PC-9 (cell line): ENCODE measurements at regions of chr2 and their contacts with region 1.

Region 1: DNA sequence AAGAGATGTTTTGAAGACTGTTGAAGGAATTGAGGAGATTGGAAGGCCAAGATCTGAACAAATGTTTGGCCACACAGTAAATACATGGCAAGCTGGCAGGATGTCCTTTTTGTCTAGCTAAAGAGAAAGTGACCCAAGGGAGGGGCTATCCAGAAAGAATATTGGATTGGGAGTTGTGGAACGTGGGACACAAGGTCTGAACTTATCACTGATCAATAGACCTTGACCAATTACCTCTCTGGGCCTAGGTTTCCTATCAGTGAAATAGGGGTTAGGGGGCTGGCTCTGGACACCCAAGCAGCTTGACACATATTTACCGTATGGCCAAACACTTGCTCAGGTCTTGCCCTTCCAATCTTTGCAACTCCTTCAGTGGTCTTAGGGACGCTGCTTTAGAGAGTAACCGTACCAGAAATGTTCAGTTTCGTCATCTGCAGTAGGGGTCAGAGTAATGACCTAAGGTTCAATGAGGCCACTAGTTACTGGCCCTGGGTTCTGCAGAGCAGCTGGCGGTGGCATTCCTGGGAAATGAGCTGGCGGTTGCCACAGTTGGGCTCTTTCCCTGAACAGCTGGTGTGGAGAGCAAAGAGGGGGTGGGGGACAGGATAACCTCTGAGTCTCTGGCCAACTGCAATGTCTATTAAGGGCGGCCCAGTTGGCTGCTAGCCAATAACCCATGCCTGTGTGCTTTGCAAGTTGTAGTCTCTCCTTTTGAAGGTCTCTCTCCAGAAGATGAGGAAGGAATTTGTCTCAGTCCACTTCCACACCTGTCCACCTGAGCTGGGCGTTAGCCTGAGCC is 70.2 kb upstream of the STPG4 start:
- DNase-seq: peak; percentile 81 to 84
- H3K4me3 ChIP-seq: no peak overlapping the region
- H3K27ac ChIP-seq: no peak overlapping the region
- H3K4me1 ChIP-seq: peaks cover 33% of the 10 kb centered on the region
- H3K27me3 ChIP-seq: no peaks in the 10 kb centered on the region
- CTCF ChIP-seq: no peak

Region 2: DNA sequence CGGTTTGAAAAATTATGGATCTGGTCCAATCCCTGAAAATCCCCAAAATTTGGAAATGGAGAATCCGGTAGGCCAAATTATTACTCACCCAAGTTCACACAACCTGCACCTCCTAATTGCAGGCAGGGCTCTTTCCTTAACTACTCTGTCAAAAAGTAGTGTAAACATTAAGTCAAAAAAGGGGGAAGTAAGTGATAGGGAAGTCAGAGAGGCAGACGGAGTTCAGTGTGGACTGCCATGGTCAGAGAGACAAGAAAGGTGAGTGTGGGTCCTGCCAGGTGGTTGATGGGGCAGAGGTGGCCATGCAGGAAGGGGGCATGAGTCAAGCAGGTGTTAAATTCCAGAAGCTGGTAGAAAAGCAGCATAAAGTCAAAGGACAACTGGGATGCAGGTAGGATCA is 34.6 kb after region 1 on chr2:
- CTCF ChIA-PET with region 1: no interaction called
- POLR2A ChIA-PET with region 1: no interaction called
- intact Hi-C with region 1: loop called (anchors 2 kb)
- DNase-seq: peak in 1 of 2 experiments; percentile 50
- H3K4me3 ChIP-seq: no peak overlapping the region
- H3K27ac ChIP-seq: no peak overlapping the region
- H3K4me1 ChIP-seq: peaks cover 44% of the 10 kb centered on the region
- H3K27me3 ChIP-seq: no peaks in the 10 kb centered on the region
- CTCF ChIP-seq: no peak

Region 3: DNA sequence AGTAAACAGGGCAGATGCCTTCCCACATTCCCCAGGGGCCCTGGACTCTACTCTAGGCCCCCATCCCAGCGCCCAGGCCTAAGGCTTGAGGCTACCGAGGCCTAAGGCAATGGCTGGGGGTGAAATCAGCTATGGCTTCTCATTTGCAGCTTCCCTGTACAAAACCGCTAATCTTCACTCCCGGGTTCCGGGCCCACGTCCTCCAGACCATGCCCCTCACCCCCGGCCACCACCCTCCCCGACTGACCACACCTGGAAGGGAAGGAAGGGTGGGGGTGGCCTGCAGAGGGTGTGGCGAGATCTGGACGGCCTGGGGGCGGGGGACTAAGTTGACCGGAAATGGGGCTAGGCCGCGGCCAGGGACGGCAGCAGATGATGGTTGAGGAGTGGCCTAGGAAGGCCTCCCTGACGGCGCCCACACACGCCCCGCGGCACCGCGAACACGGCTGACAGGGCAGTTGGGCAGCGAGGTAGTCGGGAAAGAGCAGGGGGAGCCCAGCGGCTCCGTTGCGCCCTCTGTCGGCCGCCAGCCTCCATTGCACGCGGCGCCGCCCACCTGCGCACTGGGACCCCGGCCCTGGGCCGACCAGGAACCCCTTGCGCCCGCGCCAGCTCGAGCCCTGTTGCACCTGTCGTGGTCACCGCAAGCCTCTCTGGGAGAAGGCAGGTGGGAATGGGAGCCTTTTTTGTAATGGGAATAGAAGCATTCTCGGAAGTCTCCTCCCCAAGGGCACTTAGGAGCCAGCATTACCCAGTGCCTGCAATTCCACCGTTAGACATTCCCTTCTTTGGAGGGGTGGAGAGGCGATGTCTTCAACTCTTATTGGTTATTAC is 47.0 kb after region 1 on chr2:
- CTCF ChIA-PET with region 1: no interaction called
- POLR2A ChIA-PET with region 1: no interaction called
- intact Hi-C with region 1: loop called (anchors 1 kb)
- DNase-seq: peak; percentile 79 to 92
- H3K4me3 ChIP-seq: peak overlapping the region; percentile 56; the same call in 1 of the 2 replicates
- H3K27ac ChIP-seq: peak overlapping the region; percentile 99
- H3K4me1 ChIP-seq: peaks cover 62% of the 10 kb centered on the region
- H3K27me3 ChIP-seq: no peaks in the 10 kb centered on the region
- CTCF ChIP-seq: peak; percentile 100

Region 4: DNA sequence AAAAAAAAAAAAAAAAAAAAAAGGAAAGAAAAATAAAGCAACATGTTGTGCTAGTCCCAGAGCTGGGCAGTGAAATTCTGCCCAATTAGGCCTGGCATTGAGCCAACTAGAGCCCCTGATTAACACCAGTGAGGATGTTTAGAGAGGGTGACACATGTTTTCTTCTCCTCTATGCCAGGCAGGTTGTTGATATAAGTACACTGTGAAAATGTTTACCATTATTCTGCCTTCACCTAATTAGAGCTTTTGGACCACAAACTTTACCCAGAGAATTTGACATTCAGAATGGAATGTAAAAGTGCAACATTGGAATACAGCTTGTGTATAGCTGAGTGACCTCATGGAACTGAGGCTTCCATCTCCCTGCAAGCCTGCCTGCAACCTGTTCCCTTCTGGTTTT is 81.8 kb after region 1 on chr2:
- CTCF ChIA-PET with region 1: no interaction called
- POLR2A ChIA-PET with region 1: no interaction called
- intact Hi-C with region 1: no loop called
- DNase-seq: peak in 1 of 2 experiments; percentile 67
- H3K4me3 ChIP-seq: no peak overlapping the region
- H3K27ac ChIP-seq: no peak overlapping the region
- H3K4me1 ChIP-seq: peaks cover 63% of the 10 kb centered on the region
- H3K27me3 ChIP-seq: no peaks in the 10 kb centered on the region
- CTCF ChIP-seq: no peak

Region 5: DNA sequence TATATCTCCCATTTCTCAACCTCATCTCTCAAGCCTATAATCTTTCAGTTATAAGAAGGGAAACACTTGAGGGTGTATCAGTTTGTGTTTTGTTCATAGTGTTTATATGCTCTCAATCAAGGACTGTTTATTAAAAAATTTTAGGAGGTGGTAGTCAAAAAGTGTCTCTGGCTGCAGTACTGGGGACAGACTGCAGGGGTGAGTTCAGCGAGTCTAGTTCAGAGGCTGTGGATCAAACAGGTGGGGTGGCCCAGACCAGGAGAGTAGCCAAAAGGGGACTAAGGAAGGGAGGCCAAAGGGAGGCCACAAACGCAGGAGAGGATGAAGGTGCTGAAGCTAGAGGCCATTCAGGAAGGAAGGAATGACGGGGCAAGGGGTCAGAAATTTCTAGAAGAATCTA is 314.0 kb after region 1 on chr2:
- CTCF ChIA-PET with region 1: no interaction called
- POLR2A ChIA-PET with region 1: no interaction called
- intact Hi-C with region 1: no loop called
- DNase-seq: no peak
- H3K4me3 ChIP-seq: no peak overlapping the region
- H3K27ac ChIP-seq: no peak overlapping the region
- H3K4me1 ChIP-seq: no peaks in the 10 kb centered on the region
- H3K27me3 ChIP-seq: no peaks in the 10 kb centered on the region
- CTCF ChIP-seq: peak; percentile 41; the same call in 1 of the 2 replicates